GM10248 (cell line): ENCODE measurements at regions of chr16 and their contacts with region 1.

Region 1: GRCh38 chr16:12095275-12096156 is 119.0 kb downstream of the SNX29 start:
- DNase-seq: peak; percentile 67
- CTCF ChIP-seq: peak; percentile 76

Region 2: GRCh38 chr16:11909653-11910545 is 185.6 kb before region 1 on chr16:
- CTCF ChIA-PET with region 1: no interaction called
- POLR2A ChIA-PET with region 1: no interaction called
- DNase-seq: no peak
- CTCF ChIP-seq: no peak

Region 3: DNA sequence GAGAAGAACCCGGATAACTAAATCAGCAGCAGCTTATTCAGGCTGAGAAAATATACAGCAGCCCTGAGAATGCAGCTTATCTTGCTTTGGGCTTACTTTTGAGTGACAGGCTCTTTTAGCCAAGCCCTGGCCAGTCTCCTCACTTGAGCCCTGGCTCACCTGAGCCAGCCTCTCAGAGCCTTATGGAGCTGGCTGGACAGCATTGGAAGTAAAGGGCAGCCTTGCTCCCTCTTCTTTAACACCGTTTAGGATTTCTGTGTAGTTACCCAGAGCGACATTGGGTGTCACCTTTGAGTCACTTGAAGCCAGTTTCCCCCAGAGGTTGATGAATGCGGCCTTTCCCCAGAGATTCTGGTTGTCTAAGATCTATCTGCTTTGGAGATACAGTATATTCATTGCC is 146.0 kb before region 1 on chr16:
- CTCF ChIA-PET with region 1: interaction called, 12 read pairs
- POLR2A ChIA-PET with region 1: no interaction called
- DNase-seq: peak; percentile 81
- CTCF ChIP-seq: peak; percentile 81

Region 4: GRCh38 chr16:12079412-12079965 is 16.0 kb before region 1 on chr16:
- CTCF ChIA-PET with region 1: interaction called, 48 read pairs
- POLR2A ChIA-PET with region 1: no interaction called
- DNase-seq: no peak
- CTCF ChIP-seq: no peak

Region 5: GRCh38 chr16:12113523-12114345 is 18.2 kb after region 1 on chr16:
- CTCF ChIA-PET with region 1: interaction called, 45 read pairs
- POLR2A ChIA-PET with region 1: no interaction called
- DNase-seq: no peak
- CTCF ChIP-seq: no peak

Region 6: GRCh38 chr16:12143447-12144172 is 48.1 kb after region 1 on chr16:
- CTCF ChIA-PET with region 1: interaction called, 10 read pairs
- POLR2A ChIA-PET with region 1: no interaction called
- DNase-seq: no peak
- CTCF ChIP-seq: no peak